ENCODE measurements at regions of chr7 and their contacts with region 1.

Region 1: DNA sequence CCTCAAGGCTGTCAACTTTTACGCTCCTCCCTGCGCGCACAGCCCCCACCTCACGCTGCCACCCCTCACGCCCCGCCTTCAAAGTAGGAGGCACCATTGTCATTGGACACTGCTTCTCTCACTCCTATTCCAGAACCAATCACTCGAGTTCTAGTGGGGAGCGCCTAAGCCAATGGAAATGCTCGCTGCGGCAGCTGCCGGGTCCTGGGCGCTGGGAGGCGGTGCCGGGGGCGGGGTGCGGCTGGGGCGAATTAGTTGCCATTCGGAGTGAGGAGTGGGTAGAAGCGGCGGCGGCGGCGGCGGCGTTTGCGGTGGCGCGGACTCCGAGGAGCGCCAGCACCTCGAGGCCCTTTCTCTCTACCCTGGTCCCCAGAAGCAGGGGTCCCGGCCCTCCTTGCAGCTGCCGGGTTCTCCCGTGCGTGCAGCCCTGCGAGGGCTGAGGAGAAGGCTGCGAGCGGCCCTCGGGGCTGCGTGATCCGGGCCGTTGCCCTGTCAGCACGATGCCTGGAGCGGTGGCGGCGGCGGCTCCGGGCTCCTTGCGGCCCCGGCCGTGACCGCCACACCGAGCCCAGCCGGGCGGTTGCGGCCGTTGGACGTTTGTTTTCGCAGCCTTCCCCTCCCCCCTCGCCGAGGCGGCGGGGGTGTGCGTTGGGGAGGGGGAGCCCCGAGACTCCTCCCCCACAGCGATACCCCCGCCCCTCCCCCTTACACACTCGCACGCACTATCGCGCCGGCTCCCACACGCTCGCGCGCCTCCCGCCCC is at the start of gene GLCCI1:
- ATAC-seq: peak; percentile 93 to 96 (median 94)
- H3K4me3 ChIP-seq: peak within 1 kb of the TSS; percentile 75 to 92 (median 89)
- H3K27ac ChIP-seq: peak within 1 kb of the TSS; percentile 89 to 91
- H3K4me1 ChIP-seq: peaks cover 0 to 4% of the 10 kb centered on the region in 2 donors
- total RNA-seq, gene GLCCI1: 2.7 to 46.0 (median 22.2) TPM

Region 2: GRCh38 chr7:7384228-7384627 is 584.5 kb before region 1 on chr7:
- in situ Hi-C with region 1: no loop called
- ATAC-seq: no peak
- H3K4me3 ChIP-seq: no peak overlapping the region
- H3K27ac ChIP-seq: no peak overlapping the region
- H3K4me1 ChIP-seq: no peaks in the 10 kb centered on the region

Region 3: DNA sequence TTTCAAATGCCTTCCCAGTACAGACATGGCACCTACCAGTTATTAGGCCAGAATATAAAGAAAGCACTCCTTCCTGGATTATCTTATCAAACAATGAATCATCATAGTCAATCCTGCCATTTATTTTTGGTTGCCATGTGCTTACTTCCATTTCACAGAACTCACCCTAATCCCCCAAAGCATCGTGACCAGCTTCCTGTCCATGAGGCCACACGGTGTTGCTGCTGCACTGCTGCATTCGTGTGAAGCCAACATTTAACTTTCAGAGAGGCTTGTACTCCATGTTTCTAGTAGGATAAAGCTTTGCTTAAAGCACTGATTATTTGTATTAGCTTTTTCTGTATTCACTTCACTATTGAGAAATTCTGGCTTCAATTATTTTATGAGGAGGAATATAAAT is 447.5 kb before region 1 on chr7:
- in situ Hi-C with region 1: no loop called
- ATAC-seq: no peak
- H3K4me3 ChIP-seq: no peak overlapping the region
- H3K27ac ChIP-seq: no peak overlapping the region
- H3K4me1 ChIP-seq: peaks cover 0 to 4% of the 10 kb centered on the region in 2 donors

Region 4: GRCh38 chr7:7761340-7761980 is 207.3 kb before region 1 on chr7:
- in situ Hi-C with region 1: loop called in 1 of 9 experiments (anchors 25 kb)
- ATAC-seq: no peak
- H3K4me3 ChIP-seq: no peak overlapping the region
- H3K27ac ChIP-seq: no peak overlapping the region
- H3K4me1 ChIP-seq: peaks cover 0 to 5% of the 10 kb centered on the region in 2 donors

Region 5: DNA sequence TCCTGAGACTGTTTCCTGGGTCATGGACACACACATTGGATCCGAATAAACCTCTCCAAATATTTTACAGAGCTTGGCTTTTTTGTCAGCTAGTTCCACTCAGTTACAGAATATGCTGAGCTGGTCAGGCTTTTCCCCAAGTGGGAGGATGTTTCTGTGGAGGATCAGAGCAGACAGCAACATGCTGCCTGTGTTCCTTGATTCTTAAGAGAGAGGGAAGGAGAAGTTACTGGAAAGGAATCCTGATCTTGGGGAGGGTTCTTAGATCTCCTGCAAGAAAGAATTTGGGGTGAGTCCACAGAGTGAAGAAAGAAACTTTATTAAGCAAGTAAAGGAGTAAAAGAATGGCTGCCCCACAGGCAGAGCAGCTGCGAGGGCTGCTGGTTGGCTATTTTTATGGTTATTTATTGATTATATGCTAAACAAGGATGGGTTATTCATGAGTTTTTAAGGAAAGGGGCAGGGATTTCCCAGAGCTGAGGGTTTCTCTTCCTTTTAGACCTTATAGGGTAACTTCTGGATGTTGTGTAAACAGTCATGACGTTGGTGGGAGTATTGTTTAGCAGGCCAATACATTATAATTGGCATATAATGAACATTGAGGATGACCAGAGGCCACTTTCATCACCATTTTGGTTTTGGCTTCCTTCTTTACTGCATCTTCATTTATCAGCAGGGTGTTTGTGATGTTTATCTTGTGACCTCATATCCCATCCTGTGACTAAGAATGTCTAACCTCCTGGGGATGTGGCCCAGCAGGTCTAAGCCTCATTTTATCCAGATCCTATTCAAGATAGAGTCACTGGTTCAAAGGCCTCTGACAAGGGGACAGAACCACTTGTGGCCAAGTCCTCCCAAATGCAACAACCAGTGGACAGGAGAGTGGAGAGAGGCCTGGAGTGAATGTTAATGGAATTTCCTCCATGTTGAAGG is 173.3 kb before region 1 on chr7:
- in situ Hi-C with region 1: loop called in 1 of 9 experiments (anchors 25 kb)
- ATAC-seq: peak in 3 of 8 experiments; percentile 34 to 75 (median 42)
- H3K4me3 ChIP-seq: no peak overlapping the region
- H3K27ac ChIP-seq: no peak overlapping the region
- H3K4me1 ChIP-seq: no peaks in the 10 kb centered on the region